ENCODE measurements at regions of chrX and their contacts with region 1.

Region 1: DNA sequence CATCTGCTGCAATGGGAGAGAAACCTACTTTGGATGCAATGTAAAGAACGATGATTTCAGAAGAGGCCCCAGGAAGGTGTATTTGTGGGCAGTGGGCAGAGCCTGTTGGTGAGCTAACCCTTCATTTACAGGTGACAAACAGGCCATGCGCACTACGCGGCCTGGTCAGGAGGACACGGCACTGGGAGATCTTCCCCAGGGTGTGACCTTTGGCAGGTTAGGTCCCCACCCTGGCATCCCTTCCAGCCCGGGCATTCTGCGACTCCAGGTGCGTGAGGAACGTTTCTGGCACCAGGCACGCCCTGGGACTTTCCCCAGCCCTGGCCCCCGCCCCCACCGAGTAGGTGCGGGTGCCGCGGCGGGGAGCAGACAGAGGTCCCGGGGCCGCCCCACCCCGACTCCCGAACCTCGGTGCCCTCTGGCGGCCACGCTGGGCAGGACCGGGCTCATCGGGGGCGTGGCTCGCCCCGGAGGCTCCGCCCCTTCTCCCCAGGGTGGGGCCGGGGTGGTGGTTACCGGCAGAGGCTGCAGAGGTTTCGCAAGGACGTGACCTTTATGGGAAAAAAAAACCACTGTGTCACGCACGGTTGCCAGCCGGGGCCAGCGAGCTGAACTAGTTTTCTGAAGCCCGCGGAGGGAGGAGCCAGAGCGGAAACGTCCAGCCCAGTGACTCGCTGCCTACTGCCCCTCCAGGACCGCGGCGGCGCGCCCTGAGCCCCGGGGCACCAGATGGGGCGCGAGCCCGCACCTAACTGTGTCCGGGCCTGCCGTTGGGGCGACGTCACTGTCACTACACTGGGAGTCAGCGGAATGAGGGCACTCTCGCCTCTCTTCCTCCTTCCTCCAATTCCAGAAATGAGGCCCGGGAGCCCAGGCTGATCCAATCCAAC is 5.0 kb upstream of the NYX start:
- DNase-seq: peak; percentile 69 to 92 (median 82)
- ATAC-seq: peak; percentile 96
- H3K4me3 ChIP-seq: peak overlapping the region; percentile 52
- H3K4me3 Mint-ChIP-seq: peak overlapping the region; percentile 32
- H3K27ac ChIP-seq: no peak overlapping the region
- H3K27ac Mint-ChIP-seq: no peak overlapping the region
- H3K4me1 ChIP-seq: peaks cover 13% of the 10 kb centered on the region
- H3K4me1 Mint-ChIP-seq: no peaks in the 10 kb centered on the region
- H3K27me3 ChIP-seq: no peaks in the 10 kb centered on the region
- H3K27me3 Mint-ChIP-seq: no peaks in the 10 kb centered on the region
- CTCF ChIP-seq: peak; percentile 62

Region 2: GRCh38 chrX:41180194-41180908 is 261.8 kb before region 1 on chrX:
- CTCF ChIA-PET with region 1: interaction called, 3 read pairs
- POLR2A ChIA-PET with region 1: no interaction called
- intact Hi-C with region 1: loop called in 1 of 2 experiments (anchors 10 kb)
- DNase-seq: peak; percentile 4 to 73 (median 36)
- ATAC-seq: peak; percentile 81
- H3K4me3 ChIP-seq: no peak overlapping the region
- H3K4me3 Mint-ChIP-seq: no peak overlapping the region
- H3K27ac ChIP-seq: no peak overlapping the region
- H3K27ac Mint-ChIP-seq: peak overlapping the region; percentile 77
- H3K4me1 ChIP-seq: no peaks in the 10 kb centered on the region
- H3K4me1 Mint-ChIP-seq: peaks cover 51% of the 10 kb centered on the region
- H3K27me3 ChIP-seq: no peaks in the 10 kb centered on the region
- H3K27me3 Mint-ChIP-seq: no peaks in the 10 kb centered on the region
- CTCF ChIP-seq: peak; percentile 62

Region 3: DNA sequence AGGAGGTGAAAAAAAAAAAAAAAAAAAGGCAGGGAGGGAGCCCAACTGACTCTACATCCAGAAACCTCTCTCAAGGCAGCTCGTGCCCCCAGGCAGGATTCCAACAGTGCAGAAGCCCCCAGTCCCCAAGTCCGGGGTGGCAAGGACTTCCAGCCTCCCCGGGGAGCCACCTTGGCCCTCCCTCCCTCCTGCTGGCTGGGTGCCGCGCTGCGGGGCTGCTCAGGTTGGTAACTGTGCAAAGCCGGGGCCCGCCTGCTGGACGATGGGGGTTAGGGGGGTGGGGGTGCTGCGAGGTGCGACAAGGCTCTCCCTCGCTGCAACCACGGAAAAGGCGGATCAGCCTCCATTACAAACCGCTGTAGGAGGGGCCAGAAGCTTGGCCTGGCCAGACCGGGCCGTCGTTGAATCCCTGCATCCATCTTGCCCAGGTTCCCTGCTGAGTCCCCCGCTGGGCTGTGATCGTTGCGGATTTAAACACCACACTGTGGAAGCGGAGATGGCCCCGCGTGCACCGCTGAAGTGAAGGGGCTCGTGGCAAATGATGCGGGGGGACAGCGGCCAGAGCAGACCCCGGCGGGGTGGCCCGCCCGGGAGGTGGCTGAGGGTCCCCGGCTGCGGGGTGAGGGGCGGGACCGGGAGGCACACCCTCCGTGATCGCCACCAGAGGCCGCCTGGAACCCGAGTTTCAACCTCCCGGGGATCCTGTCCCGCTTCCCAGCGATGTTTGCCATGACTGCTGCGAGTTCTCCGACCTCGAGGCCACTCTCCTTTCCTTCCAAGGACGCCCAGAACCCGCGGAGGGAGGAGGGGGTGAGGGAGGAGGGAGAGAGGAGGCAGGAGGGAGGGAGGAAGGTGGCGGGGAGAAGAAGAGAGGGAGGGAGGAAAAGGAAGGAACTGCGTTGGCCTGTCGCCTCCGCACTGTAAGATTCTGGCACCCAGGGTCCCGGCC is 166.2 kb before region 1 on chrX:
- CTCF ChIA-PET with region 1: no interaction called
- POLR2A ChIA-PET with region 1: interaction called, 3 read pairs
- intact Hi-C with region 1: loop called (anchors 1 to 5 kb)
- DNase-seq: peak in 13 of 14 experiments; percentile 14 to 77 (median 47)
- ATAC-seq: peak; percentile 71
- H3K4me3 ChIP-seq: peak overlapping the region; percentile 58
- H3K4me3 Mint-ChIP-seq: peak overlapping the region; percentile 78
- H3K27ac ChIP-seq: no peak overlapping the region
- H3K27ac Mint-ChIP-seq: peak overlapping the region; percentile 44
- H3K4me1 ChIP-seq: peaks cover 14% of the 10 kb centered on the region
- H3K4me1 Mint-ChIP-seq: no peaks in the 10 kb centered on the region
- H3K27me3 ChIP-seq: no peaks in the 10 kb centered on the region
- H3K27me3 Mint-ChIP-seq: no peaks in the 10 kb centered on the region
- CTCF ChIP-seq: peak; percentile 14

Region 4: DNA sequence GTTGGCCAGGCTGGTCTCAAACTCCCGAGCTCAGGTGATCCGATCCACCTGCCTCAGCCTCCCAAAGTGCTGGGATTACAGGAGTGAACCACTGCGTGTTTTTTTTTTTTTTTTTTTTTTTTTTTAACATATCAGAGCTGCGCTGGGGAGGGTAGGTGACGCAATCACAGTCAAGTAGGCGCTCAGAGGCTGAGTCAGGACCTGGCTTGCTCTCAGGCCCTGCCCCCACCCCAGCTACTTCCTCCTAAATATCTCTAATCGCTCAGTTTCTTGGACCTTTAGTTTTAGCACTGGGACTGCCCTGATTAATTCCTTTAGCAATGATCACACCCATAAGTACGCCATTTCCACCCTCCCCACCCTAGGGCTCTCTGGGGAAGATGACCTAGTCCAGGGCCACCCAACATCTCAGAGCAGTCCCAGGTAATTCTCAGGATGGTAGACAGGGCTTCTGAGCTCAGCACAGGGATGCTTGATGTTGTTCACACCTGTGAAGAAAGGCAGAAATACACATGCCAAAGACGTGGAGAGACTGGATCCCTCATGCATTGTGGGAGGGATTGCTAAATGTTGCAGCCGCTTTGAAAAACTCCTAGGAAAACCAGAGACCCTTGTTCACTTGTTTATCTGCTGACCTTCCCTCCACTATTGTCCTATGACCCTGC is 58.0 kb before region 1 on chrX:
- CTCF ChIA-PET with region 1: no interaction called
- POLR2A ChIA-PET with region 1: interaction called, 7 read pairs
- intact Hi-C with region 1: loop called in 1 of 2 experiments (anchors 5 kb)
- DNase-seq: peak; percentile 10 to 83 (median 46)
- ATAC-seq: peak; percentile 70
- H3K4me3 ChIP-seq: peak overlapping the region; percentile 42
- H3K4me3 Mint-ChIP-seq: no peak overlapping the region
- H3K27ac ChIP-seq: peak overlapping the region in 1 of 2 donors; percentile 34
- H3K27ac Mint-ChIP-seq: peak overlapping the region; percentile 90
- H3K4me1 ChIP-seq: peaks cover 19% of the 10 kb centered on the region
- H3K4me1 Mint-ChIP-seq: peaks cover 17% of the 10 kb centered on the region
- H3K27me3 ChIP-seq: no peaks in the 10 kb centered on the region
- H3K27me3 Mint-ChIP-seq: no peaks in the 10 kb centered on the region
- CTCF ChIP-seq: no peak

Region 5: DNA sequence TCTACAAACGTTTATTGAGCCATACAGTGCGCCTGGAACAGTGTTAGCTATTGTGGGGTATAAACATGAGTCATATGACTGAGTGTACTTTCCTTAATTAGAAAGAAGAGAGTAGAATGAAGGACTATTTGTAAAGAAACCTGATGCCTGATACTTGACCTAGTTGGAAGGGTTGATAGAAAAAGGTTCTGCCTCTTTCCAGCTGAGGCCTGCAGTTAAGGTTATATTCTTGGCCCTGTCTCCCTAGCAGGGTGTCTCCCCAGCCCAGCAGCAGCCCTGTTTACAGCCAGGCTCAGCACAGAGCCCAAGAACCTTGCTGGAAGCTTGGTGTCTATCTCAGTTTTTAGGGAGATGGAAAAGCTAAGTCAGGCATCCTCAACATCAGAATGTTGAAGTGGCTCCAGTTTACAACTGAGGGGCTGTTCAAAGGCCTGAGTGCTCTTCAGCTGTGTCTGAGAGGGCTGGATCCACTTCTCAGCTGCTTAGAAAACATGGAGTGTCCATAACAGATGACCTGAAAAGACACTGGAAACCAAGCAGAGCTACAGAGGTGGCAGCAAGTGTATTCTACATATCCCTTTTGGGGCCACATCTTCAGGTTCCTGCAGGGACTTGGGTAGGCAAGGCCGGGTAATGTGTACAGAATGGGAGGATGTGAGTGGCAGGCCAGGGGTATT is 26.6 kb after region 1 on chrX:
- CTCF ChIA-PET with region 1: no interaction called
- POLR2A ChIA-PET with region 1: no interaction called
- intact Hi-C with region 1: no loop called
- DNase-seq: no peak
- ATAC-seq: no peak
- H3K4me3 ChIP-seq: no peak overlapping the region
- H3K4me3 Mint-ChIP-seq: no peak overlapping the region
- H3K27ac ChIP-seq: no peak overlapping the region
- H3K27ac Mint-ChIP-seq: no peak overlapping the region
- H3K4me1 ChIP-seq: no peaks in the 10 kb centered on the region
- H3K4me1 Mint-ChIP-seq: no peaks in the 10 kb centered on the region
- H3K27me3 ChIP-seq: no peaks in the 10 kb centered on the region
- H3K27me3 Mint-ChIP-seq: no peaks in the 10 kb centered on the region
- CTCF ChIP-seq: no peak